Right ventricle myocardium inferior (tissue), 1 donor: ENCODE measurements at regions of chr6 and their contacts with region 1.

Region 1: GRCh38 chr6:156933201-156934068 is 156.3 kb downstream of the ARID1B start:
- DNase-seq: no peak
- ATAC-seq: peak; percentile 78

Region 2: GRCh38 chr6:156886409-156886808 is 47.0 kb before region 1 on chr6:
- intact Hi-C with region 1: loop called (anchors 5 kb)
- DNase-seq: no peak
- ATAC-seq: peak; percentile 28

Region 3: GRCh38 chr6:157123234-157123633 is 189.8 kb after region 1 on chr6:
- intact Hi-C with region 1: no loop called
- DNase-seq: no peak
- ATAC-seq: peak; percentile 73